Activated T-helper 2 cell treated with anti-CD3 and anti-CD28 coated beads, Interferon-gamma antibody, Interleukin-2, Interleukin-4, amounts not matched to agents 10 μg/mL and 5 μg/mL and 100 μg/mL, durations not matched to agents 14 hours and 24 hours and 36 hours (primary cell): ENCODE measurements at regions of chr7 and their contacts with region 1.

Region 1: GRCh38 chr7:74206589-74207120 is 3.2 kb upstream of the LAT2 start:
- DNase-seq: peak; percentile 73
- H3K4me3 Mint-ChIP-seq: peak overlapping the region; percentile 13
- H3K27ac Mint-ChIP-seq: no peak overlapping the region
- H3K4me1 Mint-ChIP-seq: peaks cover 16% of the 10 kb centered on the region
- H3K27me3 Mint-ChIP-seq: peaks cover 3% of the 10 kb centered on the region

Region 2: DNA sequence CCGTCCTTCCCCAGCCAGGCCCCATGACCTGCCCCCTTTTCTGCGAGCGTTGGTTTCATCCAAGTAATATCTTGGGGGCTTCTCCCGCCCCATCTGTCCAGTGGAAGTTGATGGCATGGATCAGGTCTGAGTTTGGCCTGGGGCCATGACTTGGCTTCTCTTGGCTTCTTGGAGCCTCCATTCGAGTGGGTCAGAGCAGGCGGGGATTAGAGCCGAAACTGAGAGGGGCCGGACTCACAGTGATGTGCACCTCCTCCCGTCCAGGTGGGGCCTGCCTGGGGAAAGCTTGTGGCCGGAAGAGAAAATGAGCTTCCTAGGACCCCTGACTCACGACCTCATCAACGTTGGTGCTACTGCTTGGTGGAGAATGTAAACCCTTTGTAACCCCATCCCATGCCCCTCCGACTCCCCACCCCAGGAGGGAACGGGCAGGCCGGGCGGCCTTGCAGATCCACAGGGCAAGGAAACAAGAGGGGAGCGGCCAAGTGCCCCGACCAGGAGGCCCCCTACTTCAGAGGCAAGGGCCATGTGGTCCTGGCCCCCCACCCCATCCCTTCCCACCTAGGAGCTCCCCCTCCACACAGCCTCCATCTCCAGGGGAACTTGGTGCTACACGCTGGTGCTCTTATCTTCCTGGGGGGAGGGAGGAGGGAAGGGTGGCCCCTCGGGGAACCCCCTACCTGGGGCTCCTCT is 138.1 kb before region 1 on chr7:
- intact Hi-C with region 1: loop called (anchors 2 kb)
- DNase-seq: no peak
- H3K4me3 Mint-ChIP-seq: no peak overlapping the region
- H3K27ac Mint-ChIP-seq: no peak overlapping the region
- H3K4me1 Mint-ChIP-seq: peaks cover 4% of the 10 kb centered on the region
- H3K27me3 Mint-ChIP-seq: no peaks in the 10 kb centered on the region

Region 3: DNA sequence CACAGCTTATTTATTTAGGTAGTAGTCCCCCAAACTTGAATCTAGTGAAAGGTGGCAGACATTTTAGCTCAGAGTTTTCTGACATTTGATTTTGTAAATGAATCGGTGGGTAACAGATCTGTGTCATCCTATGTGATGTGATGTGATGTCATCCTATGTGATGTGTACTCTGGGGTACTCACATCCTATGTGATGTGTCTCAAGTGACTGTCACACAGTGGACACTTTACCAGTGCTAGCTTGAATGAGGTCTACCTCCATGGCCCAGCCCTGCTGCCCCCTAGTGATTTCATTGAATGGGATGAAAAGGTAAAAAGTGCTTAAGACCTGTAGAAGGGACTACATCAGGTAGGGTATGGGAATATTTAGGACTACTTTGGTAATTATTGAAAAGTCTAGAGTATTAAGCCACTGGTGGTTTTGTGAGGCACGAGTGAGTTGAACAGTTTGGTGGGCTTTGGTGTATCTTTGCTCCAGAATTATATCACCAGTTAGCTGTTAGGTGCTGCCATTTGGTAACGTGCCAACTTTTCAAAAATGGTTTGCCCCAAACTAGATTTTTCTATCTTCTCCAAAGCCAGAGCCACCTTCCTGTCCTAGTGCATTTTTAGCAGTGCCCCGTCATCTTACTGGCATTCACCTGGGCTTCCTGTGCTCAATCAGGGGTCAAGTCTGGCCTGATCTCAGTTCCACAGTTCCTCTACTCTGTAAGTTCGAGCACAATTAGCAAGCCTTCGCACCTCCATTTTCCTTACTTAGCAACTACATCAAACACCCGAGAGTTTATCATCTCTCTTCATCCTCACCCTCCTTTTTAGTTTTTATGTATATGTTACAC is 22.8 kb before region 1 on chr7:
- intact Hi-C with region 1: no loop called
- DNase-seq: no peak
- H3K4me3 Mint-ChIP-seq: no peak overlapping the region
- H3K27ac Mint-ChIP-seq: peak overlapping the region; percentile 69
- H3K4me1 Mint-ChIP-seq: peaks cover 39% of the 10 kb centered on the region
- H3K27me3 Mint-ChIP-seq: no peaks in the 10 kb centered on the region

Region 4: DNA sequence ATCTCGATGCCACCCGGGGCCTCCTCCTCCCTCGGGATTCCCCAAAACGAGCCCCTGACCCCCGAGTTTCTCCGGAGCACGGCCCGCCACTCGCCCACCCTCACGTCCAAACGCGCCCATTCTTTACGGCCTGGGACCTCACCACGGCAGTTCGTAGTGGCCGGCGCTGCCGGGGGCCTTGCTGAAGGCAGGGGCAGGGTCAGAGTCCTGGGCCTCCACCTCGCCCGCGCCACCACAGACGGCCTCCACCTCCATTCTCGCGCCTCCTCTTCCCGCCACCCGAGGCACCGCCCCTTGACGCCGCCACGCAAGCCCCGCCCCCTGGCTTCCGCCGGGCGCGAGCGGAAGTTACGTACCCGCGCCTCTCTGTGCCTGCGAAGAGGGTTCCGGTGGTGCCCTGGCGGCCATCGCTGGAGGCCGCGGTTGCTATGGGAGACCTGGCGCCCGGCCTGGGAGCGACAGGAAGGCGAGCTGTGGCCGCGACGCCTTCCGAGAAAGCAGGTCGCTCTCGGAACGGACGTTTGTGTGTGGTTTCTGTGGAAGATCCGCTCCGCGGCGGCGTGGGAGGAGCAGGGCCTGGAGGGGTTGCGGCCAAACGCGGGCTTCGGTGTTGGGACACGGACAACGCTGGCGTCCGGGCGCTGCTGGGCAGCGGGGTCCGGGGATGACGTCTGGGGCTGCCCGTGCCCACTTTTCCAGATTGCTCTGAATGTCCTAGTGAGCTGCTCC is 47.6 kb after region 1 on chr7 and contains the start of gene RFC2:
- intact Hi-C with region 1: loop called (anchors 5 kb)
- DNase-seq: peak; percentile 97
- H3K4me3 Mint-ChIP-seq: peak within 1 kb of the TSS; percentile 96
- H3K27ac Mint-ChIP-seq: peak within 1 kb of the TSS; percentile 91
- H3K4me1 Mint-ChIP-seq: peaks cover 17% of the 10 kb centered on the region
- H3K27me3 Mint-ChIP-seq: no peaks in the 10 kb centered on the region
- total RNA-seq, gene RFC2: 82.9 and 85.2 TPM in 2 replicates

Region 5: GRCh38 chr7:74401137-74401859 is 194.6 kb after region 1 on chr7:
- intact Hi-C with region 1: loop called (anchors 1 kb)
- DNase-seq: peak; percentile 55
- H3K4me3 Mint-ChIP-seq: no peak overlapping the region
- H3K27ac Mint-ChIP-seq: no peak overlapping the region
- H3K4me1 Mint-ChIP-seq: no peaks in the 10 kb centered on the region
- H3K27me3 Mint-ChIP-seq: no peaks in the 10 kb centered on the region